Right ventricle myocardium inferior (tissue), 1 donor: ENCODE measurements at regions of chr1 and their contacts with region 1.

Region 1: DNA sequence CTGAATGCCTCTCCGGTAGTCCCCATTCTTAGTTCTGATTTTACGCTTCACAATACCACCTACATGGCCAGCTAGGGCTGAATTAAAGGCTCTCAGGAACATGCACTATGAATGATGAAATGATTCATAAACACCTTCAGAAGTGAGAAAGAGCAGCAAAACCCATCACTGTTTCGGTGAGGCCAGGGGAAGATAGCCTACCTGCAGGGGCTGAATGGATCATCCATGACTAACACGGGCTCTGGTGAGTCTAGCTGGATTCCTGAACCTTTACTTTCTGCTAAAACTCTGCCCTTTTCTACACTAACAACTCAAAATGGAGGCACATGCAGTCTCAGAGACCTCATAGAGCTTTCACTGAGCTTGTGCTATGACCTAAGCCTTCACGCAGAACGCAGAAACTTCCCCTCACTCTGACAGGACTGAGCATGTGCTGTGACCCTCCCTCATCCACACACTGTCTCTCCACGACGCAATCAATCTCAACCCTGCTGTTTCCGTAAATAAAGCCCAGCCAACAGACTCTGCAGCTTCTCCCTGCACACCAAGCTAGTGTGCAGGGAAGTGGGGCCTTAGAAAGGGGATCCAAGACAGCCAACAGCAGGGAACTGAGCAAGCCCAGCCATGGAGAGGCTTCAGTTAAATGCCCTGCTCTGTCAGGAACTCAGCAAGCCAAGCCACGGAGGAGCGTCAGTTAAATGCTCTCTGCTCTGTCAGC is 207.8 kb downstream of the SLC45A1 start:
- DNase-seq: peak; percentile 82
- ATAC-seq: peak; percentile 99

Region 2: DNA sequence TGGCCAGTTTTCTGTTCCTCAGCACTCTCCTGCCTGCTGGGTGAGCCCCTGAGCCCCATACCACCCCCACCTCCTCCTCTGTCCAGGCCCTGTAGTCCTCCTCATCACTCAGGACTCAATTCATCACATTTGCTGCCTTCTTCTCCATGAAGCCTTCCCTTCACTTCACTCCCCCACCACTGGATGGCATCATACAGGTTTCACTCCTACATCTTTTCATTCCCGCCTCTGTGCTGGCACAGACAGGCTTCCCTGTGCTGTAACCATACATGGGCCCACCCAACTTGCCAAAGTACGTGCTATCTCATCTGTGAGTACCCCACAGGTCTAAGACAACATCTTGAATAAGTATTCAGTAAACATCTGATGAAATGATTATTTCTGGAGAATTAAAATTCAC is 150.9 kb before region 1 on chr1:
- intact Hi-C with region 1: loop called (anchors 5 kb)
- DNase-seq: no peak
- ATAC-seq: no peak

Region 3: DNA sequence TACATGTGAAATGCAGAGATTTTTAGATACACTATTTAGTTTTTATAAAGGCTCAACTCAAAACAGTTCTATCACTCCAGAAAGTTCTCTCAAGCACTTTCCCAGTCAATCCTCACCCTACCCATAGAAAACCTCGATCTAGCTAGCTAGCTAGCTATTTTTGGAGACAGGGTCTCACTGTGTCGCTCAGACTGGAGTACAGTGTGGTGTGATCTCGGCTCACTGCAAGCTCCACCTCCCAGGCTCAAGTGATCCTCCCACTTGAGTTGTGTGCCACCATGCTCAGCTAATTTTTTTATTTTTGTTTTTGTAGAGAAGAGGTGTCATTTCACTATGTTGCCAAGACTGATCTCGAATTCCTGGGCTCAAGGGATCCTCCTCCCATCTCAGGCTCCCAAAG is 54.8 kb after region 1 on chr1:
- intact Hi-C with region 1: no loop called
- DNase-seq: no peak
- ATAC-seq: peak; percentile 79